Head of caudate nucleus (tissue), 42 donors: ENCODE measurements at regions of chr7 and their contacts with region 1.

Region 1: DNA sequence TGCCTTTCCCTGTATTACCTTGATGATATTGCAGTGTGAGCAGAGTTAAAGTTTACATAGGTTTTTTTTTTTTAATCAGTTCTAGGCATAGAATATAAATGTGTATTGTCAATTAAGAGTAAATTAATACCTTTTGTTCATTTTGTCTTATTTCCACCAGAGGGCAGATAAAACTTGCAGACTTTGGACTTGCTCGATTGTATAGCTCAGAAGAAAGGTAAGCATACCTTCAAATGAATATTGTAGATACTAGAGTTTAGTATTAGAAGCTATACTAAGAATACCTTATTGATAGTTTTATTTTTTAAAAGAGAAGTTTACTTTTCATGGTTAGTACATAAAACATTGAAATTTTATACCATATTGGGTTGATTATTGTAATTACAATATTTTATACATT is 86.8 kb downstream of the MPLKIP start:
- DNase-seq: no peak

Region 2: DNA sequence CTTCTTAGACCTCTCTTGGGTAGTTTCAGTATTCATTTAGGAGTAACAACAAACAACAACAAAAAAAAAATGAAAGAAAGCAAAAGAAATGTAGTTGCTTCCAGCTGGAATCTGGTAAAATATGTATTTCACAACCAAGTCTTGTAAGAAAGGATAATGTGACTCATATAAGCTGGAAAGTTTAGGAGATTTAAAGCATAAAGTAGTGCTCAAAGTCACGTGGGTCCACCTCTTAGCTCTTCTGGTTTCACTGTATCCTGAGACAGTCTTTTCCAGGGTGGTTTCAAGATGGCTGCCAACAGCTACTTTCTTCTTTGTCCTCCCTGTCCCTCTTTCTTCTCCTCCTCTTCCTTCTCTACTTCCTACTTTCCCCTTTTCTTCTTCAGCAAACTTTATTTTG is 167.1 kb before region 1 on chr7:
- intact Hi-C with region 1: no loop called
- DNase-seq: no peak

Region 3: GRCh38 chr7:39894904-39895303 is 152.8 kb before region 1 on chr7:
- intact Hi-C with region 1: loop called (anchors 5 kb)
- DNase-seq: no peak

Region 4: GRCh38 chr7:40077849-40078248 is 30.2 kb after region 1 on chr7:
- intact Hi-C with region 1: no loop called
- DNase-seq: no peak

Region 5: DNA sequence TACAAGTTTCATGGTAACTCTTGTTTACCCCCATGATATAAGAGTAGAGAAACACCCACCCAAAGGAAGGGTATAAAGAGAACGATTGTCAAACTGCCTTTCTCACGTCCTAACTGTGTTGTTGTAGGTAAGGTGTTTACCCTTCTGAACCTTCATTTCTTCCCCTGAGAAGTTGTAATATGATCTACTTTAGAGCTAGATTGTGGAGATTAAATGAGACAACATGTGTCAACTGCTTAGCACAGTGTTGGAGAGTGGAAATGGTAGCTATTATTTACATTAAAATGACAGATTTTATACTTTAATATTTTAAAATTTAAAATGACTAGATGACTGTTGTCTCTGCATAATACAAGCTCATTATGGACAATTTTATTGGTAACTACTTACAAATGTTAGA is 311.9 kb after region 1 on chr7:
- intact Hi-C with region 1: no loop called
- DNase-seq: no peak